ENCODE measurements at regions of chr9 and their contacts with region 1.

Region 1: DNA sequence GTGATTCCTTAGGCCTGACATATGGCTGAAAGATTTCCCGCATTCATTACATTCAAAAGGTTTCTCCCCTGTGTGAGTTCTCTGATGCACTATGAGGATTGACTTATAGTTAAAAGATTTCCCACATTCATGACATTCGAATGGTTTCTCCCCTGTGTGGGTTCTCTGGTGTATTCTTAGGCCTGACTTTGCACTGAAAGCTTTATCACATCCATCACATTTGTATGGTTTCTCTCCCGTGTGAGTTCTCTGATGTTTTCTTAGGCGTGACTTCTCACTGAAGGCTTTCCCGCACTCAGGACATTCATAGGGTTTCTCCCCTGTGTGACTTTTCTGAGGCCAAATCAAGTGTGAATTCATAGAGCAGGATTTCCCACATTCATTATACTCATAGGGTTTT is 35.8 kb downstream of the ZNF782 start:
- DNase-seq: no peak
- H3K4me3 Mint-ChIP-seq: no peak overlapping the region
- H3K27ac Mint-ChIP-seq: no peak overlapping the region
- H3K4me1 Mint-ChIP-seq: no peaks in the 10 kb centered on the region
- H3K27me3 Mint-ChIP-seq: no peaks in the 10 kb centered on the region

Region 2: DNA sequence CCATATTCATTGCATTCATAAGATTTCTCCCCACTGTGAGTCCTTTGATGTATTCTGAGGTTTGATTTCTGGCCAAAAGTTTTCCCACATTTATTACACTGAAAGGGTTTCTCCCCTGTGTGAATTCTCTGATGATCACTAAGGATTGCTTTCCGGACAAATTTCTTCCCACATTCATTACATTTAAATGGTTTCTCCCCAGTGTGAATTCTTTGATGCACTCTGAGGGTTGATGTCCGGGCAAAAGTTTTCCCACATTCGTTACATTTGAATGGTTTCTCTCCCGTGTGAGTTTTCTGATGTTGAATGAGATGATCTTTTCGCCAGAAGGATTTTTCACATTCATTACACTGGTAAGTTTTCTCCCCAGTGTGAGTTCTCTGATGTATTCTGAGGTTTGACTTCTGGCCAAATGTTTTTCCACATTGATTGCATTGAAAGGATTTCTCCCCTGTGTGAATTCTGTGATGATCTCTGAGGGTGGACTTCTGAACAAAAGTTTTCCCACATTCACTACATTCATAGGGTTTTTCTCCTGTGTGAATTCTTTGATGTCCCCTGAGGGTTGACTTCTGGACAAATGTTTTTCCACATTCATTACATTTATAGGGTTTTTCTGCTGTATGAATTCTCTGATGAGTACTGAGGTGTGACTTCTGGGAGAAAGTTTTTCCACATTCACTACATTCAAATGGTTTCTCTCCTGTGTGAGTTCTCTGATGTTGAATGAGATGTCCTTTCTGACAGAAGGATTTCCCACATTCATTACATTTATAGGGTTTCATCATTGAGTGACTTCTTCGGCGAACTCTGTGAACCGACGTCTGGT is 59.5 kb before region 1 on chr9:
- CTCF ChIA-PET with region 1: no interaction called
- POLR2A ChIA-PET with region 1: no interaction called
- intact Hi-C with region 1: loop called (anchors 10 kb)
- DNase-seq: no peak
- H3K4me3 Mint-ChIP-seq: no peak overlapping the region
- H3K27ac Mint-ChIP-seq: no peak overlapping the region
- H3K4me1 Mint-ChIP-seq: no peaks in the 10 kb centered on the region
- H3K27me3 Mint-ChIP-seq: no peaks in the 10 kb centered on the region